ENCODE measurements at regions of chr1 and their contacts with region 1.

Region 1: DNA sequence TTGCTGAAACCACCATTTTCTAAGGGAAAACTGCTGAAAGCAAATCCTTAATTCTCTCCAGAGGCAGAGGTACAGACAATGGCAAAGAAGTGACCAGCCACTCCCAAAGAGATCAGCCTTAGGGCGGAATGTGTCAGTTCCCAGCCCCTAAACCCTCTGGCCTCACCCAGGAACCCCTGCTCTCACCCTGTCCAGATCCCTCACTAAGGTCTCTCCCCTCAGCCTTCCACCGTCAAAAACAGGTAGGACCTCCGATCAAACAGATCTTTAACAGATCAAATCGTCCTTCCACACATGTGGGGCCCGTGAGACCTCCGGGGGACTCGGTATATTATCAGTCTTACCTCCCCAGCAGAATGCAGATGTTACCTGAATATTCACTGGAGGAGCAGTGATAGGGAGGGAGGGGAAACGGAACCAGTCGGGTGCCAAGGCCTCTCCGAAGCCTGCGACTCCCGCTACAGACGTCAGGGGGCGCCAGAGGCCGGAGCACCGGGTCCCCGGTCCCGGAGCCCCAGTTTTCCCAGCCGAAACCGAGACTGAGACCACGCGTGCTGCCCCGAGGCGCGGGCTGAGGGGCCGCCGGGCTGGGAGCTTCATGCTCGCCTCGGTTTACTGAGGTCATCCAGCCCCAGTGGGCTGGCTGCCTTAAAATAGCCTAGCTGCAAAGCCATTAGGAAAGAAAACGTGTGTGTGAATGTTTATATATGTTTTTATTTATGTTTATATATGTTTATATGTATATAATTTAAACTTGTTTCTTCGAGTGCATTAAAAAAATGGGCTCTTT is 23.6 kb downstream of the GPA33 start:
- DNase-seq: peak; percentile 83
- ATAC-seq: peak; percentile 99
- H3K4me3 Mint-ChIP-seq: peak overlapping the region; percentile 18
- H3K27ac Mint-ChIP-seq: no peak overlapping the region
- H3K4me1 Mint-ChIP-seq: no peaks in the 10 kb centered on the region
- H3K27me3 Mint-ChIP-seq: no peaks in the 10 kb centered on the region
- CTCF ChIP-seq: peak; percentile 99

Region 2: GRCh38 chr1:167016100-167016750 is 50.3 kb before region 1 on chr1:
- CTCF ChIA-PET with region 1: no interaction called
- POLR2A ChIA-PET with region 1: no interaction called
- intact Hi-C with region 1: no loop called
- DNase-seq: no peak
- ATAC-seq: no peak
- H3K4me3 Mint-ChIP-seq: no peak overlapping the region
- H3K27ac Mint-ChIP-seq: no peak overlapping the region
- H3K4me1 Mint-ChIP-seq: peaks cover 2% of the 10 kb centered on the region
- H3K27me3 Mint-ChIP-seq: peaks cover 26% of the 10 kb centered on the region
- CTCF ChIP-seq: no peak

Region 3: DNA sequence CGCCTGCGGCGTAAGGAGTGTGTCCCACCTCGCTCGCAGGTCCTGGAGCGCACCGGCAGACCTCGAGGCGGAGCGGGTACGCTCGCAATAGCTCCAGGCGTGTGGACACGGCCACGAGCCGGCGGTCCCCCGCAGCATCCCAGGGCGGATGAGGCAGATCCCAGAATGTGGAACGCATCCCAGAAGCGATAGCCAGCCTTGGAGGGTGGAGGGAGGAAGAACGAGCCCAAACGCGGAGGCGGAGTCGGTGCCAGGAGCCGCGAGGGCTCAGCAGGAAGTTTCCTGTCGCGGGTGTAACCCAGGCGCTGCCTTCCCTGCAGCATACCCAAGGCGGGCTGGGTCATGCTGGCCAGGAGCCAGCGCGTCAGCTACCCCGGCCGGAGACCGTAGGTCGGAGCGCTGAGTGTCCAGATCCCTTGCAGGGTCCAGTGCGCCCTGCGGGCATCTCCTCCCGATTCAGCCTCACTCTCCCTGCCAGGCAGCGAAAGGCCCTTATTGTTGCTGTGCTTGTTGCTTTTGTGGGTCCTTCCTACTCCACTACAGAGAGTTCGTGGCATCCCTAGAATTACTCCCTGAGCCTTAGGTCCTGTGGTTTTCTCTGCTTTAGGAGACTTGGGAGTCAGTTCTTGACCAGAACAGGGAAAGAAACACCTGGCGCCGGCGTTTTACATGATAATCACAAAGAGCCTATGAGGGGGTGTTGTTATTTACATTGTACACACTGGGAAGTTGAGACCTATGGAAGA is 55.0 kb after region 1 on chr1:
- CTCF ChIA-PET with region 1: interaction called, 120 read pairs
- POLR2A ChIA-PET with region 1: no interaction called
- intact Hi-C with region 1: loop called (anchors 5 kb)
- DNase-seq: peak; percentile 31
- ATAC-seq: peak; percentile 63
- H3K4me3 Mint-ChIP-seq: peak overlapping the region; percentile 70
- H3K27ac Mint-ChIP-seq: peak overlapping the region; percentile 12
- H3K4me1 Mint-ChIP-seq: no peaks in the 10 kb centered on the region
- H3K27me3 Mint-ChIP-seq: peaks cover 7% of the 10 kb centered on the region
- CTCF ChIP-seq: no peak

Region 4: DNA sequence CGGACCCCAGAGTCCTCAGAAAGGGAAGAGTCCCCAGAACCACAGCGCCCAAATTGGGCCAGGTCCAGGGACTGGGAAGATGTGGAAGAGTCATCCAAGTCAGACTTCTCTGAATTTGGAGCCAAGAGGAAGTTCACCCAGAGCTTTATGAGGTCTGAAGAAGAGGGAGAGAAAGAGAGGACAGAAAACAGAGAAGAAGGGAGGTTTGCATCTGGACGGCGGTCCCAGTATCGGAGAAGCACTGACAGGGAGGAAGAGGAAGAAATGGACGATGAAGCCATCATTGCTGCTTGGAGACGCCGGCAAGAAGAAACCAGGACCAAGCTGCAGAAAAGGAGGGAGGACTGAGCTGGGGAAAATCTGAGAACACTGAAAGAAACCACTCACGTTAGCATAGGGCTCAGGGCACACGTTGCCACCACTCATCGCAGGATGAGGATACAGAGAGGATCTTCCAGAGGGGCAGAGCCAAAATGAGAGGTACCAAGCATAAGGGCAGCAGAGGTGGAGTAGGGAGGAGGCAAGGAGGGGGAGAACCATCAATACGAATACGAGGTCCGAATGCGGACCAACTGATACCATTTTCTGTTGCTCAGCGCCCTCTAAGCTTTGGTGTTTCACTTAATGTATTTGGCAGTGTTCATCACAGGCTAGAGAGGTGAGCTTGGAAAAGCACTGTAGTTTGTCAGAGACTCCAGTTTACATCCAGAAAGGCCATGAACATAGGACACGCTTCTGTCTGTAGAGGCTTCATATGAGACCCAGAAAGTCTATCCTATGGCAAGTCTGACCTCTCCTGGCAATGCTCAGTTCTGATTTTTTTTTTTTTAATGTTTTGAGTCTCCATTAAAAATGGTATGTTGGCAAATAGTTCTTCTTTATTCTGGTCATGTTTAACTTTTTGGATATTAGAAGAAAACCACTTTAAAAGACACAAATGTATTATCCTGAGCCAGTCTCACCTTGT is 62.0 kb after region 1 on chr1:
- CTCF ChIA-PET with region 1: interaction called, 120 read pairs
- POLR2A ChIA-PET with region 1: no interaction called
- intact Hi-C with region 1: loop called (anchors 5 kb)
- DNase-seq: no peak
- ATAC-seq: no peak
- H3K4me3 Mint-ChIP-seq: no peak overlapping the region
- H3K27ac Mint-ChIP-seq: no peak overlapping the region
- H3K4me1 Mint-ChIP-seq: no peaks in the 10 kb centered on the region
- H3K27me3 Mint-ChIP-seq: peaks cover 12% of the 10 kb centered on the region
- CTCF ChIP-seq: no peak

Region 5: GRCh38 chr1:167220537-167221125 is 154.1 kb after region 1 on chr1 and contains the start of gene POU2F1:
- CTCF ChIA-PET with region 1: interaction called, 10 read pairs
- POLR2A ChIA-PET with region 1: interaction called, 4 read pairs
- intact Hi-C with region 1: loop called (anchors 5 kb)
- DNase-seq: peak; percentile 99
- ATAC-seq: peak; percentile 81
- H3K4me3 Mint-ChIP-seq: peak within 1 kb of the TSS; percentile 92
- H3K27ac Mint-ChIP-seq: peak within 1 kb of the TSS; percentile 99
- H3K4me1 Mint-ChIP-seq: peaks cover 43% of the 10 kb centered on the region
- H3K27me3 Mint-ChIP-seq: no peaks in the 10 kb centered on the region
- CTCF ChIP-seq: peak; percentile 11
- total RNA-seq, gene POU2F1: 23.6 to 24.2 TPM

Region 6: GRCh38 chr1:167401260-167401873 is 334.8 kb after region 1 on chr1:
- CTCF ChIA-PET with region 1: interaction called, 3 read pairs
- POLR2A ChIA-PET with region 1: no interaction called
- intact Hi-C with region 1: loop called (anchors 10 kb)
- DNase-seq: peak; percentile 69
- ATAC-seq: peak; percentile 77
- H3K4me3 Mint-ChIP-seq: no peak overlapping the region
- H3K27ac Mint-ChIP-seq: no peak overlapping the region
- H3K4me1 Mint-ChIP-seq: peaks cover 2% of the 10 kb centered on the region
- H3K27me3 Mint-ChIP-seq: no peaks in the 10 kb centered on the region
- CTCF ChIP-seq: peak; percentile 68

Region 7: GRCh38 chr1:167553136-167554027 is 486.9 kb after region 1 on chr1 and contains the start of gene CREG1:
- CTCF ChIA-PET with region 1: interaction called, 5 read pairs
- POLR2A ChIA-PET with region 1: no interaction called
- intact Hi-C with region 1: loop called (anchors 10 kb)
- DNase-seq: peak; percentile 92
- ATAC-seq: peak; percentile 100
- H3K4me3 Mint-ChIP-seq: peak within 1 kb of the TSS; percentile 86
- H3K27ac Mint-ChIP-seq: peak within 1 kb of the TSS; percentile 23
- H3K4me1 Mint-ChIP-seq: peaks cover 32% of the 10 kb centered on the region
- H3K27me3 Mint-ChIP-seq: no peaks in the 10 kb centered on the region
- CTCF ChIP-seq: no peak
- total RNA-seq, gene CREG1: 9.7 to 10.0 TPM